ENCODE measurements at regions of chr16 and their contacts with region 1.

Region 1: GRCh38 chr16:82031116-82032084 is 3.7 kb upstream of the HSD17B2 start:
- DNase-seq: no peak
- H3K4me3 ChIP-seq: no peak overlapping the region
- H3K27ac ChIP-seq: no peak overlapping the region
- H3K4me1 ChIP-seq: peaks cover 5 to 54% (median 16%) of the 10 kb centered on the region in 3 donors
- H3K27me3 ChIP-seq: no peaks in the 10 kb centered on the region
- CTCF ChIP-seq: peak in 5 of 6 experiments; percentile 45 to 67 (median 59)
- POLR2A ChIP-seq: no peak

Region 2: DNA sequence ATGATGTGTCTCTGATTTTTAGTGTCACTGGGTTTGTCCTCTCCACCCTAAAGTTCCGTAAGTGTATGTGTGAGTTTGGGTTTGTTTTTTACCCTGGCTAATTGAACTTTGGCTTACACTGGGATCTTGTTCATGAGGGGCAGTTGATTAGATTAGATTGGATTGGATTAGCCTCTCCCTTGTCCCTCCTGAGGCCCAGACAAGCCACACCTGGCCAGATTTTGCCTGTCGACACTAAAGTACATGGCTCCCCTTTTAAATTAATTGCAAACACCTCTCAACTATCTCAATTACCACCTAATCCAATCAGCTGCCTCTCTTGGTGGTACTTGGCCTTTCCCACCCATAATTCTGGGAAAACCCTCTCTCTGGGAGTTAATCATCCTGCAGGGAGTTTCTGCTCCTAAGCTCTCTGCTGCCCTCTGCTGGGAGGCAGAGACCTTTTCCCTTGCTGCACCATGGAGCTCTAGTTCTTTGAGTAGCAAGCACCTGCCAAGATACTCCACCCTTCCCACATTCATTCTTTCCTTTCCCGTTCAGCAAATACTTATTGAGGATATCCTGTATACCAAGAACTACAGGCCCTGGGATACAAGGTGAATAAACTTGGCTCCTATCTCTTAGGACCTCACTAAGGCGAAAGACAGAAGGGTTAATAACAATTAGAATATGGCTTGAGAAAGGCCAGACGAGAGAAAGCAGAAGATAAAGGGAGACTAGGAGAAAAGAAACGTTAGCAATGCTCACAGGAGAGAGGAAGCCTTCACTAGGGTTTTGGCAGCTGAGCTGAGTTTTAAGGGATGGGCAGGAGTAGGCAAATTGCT is 198.6 kb after region 1 on chr16:
- intact Hi-C with region 1: loop called (anchors 5 kb)
- DNase-seq: no peak
- H3K4me3 ChIP-seq: no peak overlapping the region
- H3K27ac ChIP-seq: no peak overlapping the region
- H3K4me1 ChIP-seq: peaks cover 0 to 11% (median 0%) of the 10 kb centered on the region in 3 donors
- H3K27me3 ChIP-seq: no peaks in the 10 kb centered on the region
- CTCF ChIP-seq: peak; percentile 64 to 92 (median 90)
- POLR2A ChIP-seq: no peak

Region 3: DNA sequence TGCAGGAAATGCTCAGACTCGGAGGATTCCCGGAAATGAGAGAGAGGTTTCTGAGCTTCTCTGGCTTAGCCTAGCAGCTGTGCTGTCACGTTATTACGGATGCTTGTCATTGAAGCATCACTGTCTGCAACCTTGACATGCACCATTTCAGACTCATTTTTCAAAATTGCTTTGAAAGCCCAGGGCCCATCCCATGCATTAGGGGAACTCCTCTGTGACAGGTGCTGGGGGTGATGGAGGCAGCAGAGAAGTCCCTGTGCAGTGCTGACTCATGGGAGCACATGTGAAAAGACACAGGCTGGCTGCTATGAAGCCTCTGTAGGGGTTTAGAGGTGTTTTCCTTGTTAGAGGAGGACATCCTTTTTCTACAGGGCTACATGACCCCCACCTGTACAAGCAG is 352.6 kb after region 1 on chr16:
- intact Hi-C with region 1: no loop called
- DNase-seq: no peak
- H3K4me3 ChIP-seq: no peak overlapping the region
- H3K27ac ChIP-seq: no peak overlapping the region
- H3K4me1 ChIP-seq: no peaks in the 10 kb centered on the region
- H3K27me3 ChIP-seq: no peaks in the 10 kb centered on the region
- CTCF ChIP-seq: no peak
- POLR2A ChIP-seq: no peak

Measured in esophagus squamous epithelium (tissue), 5 donors.